ENCODE measurements at regions of chr3 and their contacts with region 1.

Region 1: GRCh38 chr3:4834403-4834866 is 144.8 kb upstream of the BHLHE40 start:
- DNase-seq: no peak
- ATAC-seq: peak; percentile 56
- H3K4me3 Mint-ChIP-seq: no peak overlapping the region
- H3K27ac Mint-ChIP-seq: peak overlapping the region; percentile 59
- H3K4me1 Mint-ChIP-seq: peaks cover 68% of the 10 kb centered on the region
- H3K27me3 Mint-ChIP-seq: no peaks in the 10 kb centered on the region
- CTCF ChIP-seq: no peak

Region 2: DNA sequence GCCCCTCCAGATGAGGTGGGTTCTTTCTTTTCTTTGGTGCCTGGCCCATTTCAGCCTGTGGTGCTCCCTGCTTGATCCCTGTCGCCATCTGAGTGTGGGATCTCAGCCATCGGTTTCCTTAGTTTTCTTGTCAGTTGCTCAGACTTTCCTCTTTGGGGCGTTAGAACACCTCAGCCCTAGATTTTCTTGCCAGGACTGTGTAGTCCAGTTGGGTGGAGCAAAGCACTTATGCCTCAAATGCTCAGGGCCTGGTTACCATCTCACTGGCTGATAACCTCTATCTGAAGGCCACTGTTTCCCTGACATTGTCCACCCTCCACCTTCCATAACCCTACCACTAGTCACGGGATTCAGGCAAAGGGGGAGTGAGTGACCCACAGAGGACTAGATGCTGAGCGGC is 63.9 kb before region 1 on chr3:
- CTCF ChIA-PET with region 1: no interaction called
- POLR2A ChIA-PET with region 1: no interaction called
- intact Hi-C with region 1: no loop called
- DNase-seq: no peak
- ATAC-seq: no peak
- H3K4me3 Mint-ChIP-seq: no peak overlapping the region
- H3K27ac Mint-ChIP-seq: no peak overlapping the region
- H3K4me1 Mint-ChIP-seq: peaks cover 1% of the 10 kb centered on the region
- H3K27me3 Mint-ChIP-seq: no peaks in the 10 kb centered on the region
- CTCF ChIP-seq: no peak

Region 3: DNA sequence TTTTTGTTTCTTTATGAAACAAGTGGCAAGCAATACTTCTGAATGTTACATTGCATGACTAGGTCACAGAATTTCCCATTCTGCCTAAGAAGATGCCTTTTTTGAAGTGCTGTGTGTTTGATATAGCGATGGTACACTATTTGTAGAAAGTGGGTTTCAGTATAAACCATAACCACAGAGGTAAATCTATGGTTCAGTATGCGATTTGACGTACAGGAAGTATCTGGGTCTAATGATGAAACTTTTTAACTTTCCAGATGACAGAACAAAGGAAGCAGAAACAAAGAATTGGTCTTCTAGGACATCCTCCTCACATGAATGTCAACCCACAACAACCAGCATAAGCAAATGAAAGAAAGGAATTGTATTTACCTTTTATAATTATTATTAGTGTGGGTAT is 11.4 kb after region 1 on chr3:
- CTCF ChIA-PET with region 1: interaction called, 3 read pairs
- POLR2A ChIA-PET with region 1: interaction called, 19 read pairs
- intact Hi-C with region 1: loop called (anchors 1 kb)
- DNase-seq: no peak
- ATAC-seq: peak; percentile 66
- H3K4me3 Mint-ChIP-seq: peak overlapping the region; percentile 16
- H3K27ac Mint-ChIP-seq: peak overlapping the region; percentile 69
- H3K4me1 Mint-ChIP-seq: peaks cover 72% of the 10 kb centered on the region
- H3K27me3 Mint-ChIP-seq: no peaks in the 10 kb centered on the region
- CTCF ChIP-seq: no peak

Region 4: GRCh38 chr3:5016218-5017161 is 182.1 kb after region 1 on chr3:
- CTCF ChIA-PET with region 1: interaction called, 3 read pairs
- POLR2A ChIA-PET with region 1: interaction called, 6 read pairs
- intact Hi-C with region 1: loop called (anchors 1 kb)
- DNase-seq: no peak
- ATAC-seq: peak; percentile 18
- H3K4me3 Mint-ChIP-seq: peak overlapping the region; percentile 16
- H3K27ac Mint-ChIP-seq: peak overlapping the region; percentile 66
- H3K4me1 Mint-ChIP-seq: peaks cover 86% of the 10 kb centered on the region
- H3K27me3 Mint-ChIP-seq: no peaks in the 10 kb centered on the region
- CTCF ChIP-seq: no peak

Region 5: GRCh38 chr3:5057857-5058324 is 223.5 kb after region 1 on chr3:
- CTCF ChIA-PET with region 1: interaction called, 5 read pairs
- POLR2A ChIA-PET with region 1: no interaction called
- intact Hi-C with region 1: loop called (anchors 1 kb)
- DNase-seq: peak; percentile 38
- ATAC-seq: peak; percentile 90
- H3K4me3 Mint-ChIP-seq: no peak overlapping the region
- H3K27ac Mint-ChIP-seq: peak overlapping the region; percentile 3
- H3K4me1 Mint-ChIP-seq: peaks cover 42% of the 10 kb centered on the region
- H3K27me3 Mint-ChIP-seq: no peaks in the 10 kb centered on the region
- CTCF ChIP-seq: peak; percentile 26